Left cardiac atrium (tissue), 4 donors: ENCODE measurements at regions of chr3 and their contacts with region 1.

Region 1: GRCh38 chr3:138609898-138610266 is 1.3 kb downstream of the FAIM start:
- DNase-seq: no peak
- ATAC-seq: no peak

Region 2: GRCh38 chr3:138686771-138687221 is 76.9 kb after region 1 on chr3:
- intact Hi-C with region 1: loop called in 1 of 2 experiments (anchors 10 kb)
- DNase-seq: no peak
- ATAC-seq: peak in 1 of 2 donors; percentile 29

Region 3: DNA sequence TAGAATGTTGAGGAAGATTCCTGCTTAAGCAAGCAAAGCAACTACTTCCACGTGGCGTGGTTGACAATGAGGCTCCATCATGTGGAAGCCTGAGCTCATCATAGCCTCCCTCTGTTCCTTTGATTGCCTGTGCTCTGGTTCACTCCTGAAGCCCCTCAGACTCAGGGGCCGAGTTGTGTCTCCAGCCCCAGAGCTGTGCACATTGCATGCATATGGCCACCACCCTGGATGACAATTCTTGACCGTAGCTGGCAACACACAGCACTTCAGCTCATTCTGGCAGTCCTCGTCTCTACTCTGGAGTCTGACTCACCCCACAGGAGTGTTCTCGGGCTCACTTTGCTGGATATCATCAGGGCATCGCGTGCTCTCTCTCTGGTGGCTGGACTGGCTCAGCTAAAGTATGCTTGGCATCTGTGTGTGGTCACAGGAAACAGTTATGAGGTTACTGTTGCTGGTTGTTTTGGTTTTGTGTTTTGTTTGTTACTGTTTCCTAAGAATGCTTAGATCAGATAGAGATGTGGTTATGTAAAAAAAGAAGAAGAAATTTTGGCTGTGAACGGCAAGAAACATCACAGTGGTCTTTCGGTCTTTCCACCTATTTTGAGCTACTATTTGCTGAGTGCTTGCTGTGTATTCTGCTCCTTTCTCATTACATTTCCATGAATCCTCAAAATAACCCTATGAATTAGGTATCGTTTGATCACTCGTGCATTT is 692.4 kb after region 1 on chr3:
- intact Hi-C with region 1: no loop called
- DNase-seq: peak; percentile 45
- ATAC-seq: peak; percentile 85 to 93